ENCODE measurements at regions of chr9 and their contacts with region 1.

Region 1: DNA sequence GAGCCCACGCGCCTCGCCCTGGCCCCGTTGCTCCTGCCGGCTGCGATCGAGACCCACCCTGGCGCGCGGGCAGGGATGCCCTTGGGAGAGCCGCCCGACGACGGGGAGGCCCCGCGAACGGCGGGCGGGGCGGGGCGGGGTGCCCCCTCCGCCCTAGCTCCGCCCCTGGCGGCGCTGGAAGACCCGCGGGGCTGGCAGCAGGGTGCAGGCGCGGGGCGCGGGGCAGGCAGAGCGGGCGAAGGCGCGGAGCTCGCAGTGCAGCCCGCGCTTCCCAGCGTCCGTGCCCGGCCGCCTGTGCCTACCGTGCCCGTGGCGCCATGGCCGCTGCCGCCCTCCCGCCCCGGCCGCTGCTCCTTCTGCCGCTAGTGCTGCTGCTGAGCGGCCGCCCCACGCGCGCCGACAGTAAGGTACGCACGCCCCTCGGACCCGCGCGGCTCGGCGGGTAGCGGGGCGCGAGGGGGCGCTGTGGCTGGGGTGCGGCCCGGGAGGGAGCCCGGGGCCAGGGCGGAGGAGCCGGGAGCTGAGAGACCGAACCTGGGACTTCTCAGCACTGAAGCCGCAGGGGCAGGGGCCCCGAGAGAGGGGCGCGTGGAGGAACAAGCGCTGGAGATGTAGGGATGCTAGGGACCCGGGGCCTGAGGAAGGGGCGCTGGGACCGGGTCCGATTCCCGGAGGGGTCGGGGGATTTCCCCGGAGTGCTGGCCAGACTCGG is at the start of gene OLFML2A:
- DNase-seq: no peak
- H3K4me3 ChIP-seq: peak within 1 kb of the TSS; percentile 33 to 61 (median 58)
- H3K27ac ChIP-seq: no peak within 1 kb of the TSS
- H3K4me1 ChIP-seq: peaks cover 29% of the 10 kb centered on the region
- H3K27me3 ChIP-seq: no peaks in the 10 kb centered on the region
- CTCF ChIP-seq: peak in 1 of 2 donors; percentile 40
- total RNA-seq, gene OLFML2A: 4.2 to 6.2 TPM

Region 2: GRCh38 chr9:124809741-124810500 is 32.8 kb after region 1 on chr9:
- CTCF ChIA-PET with region 1: interaction called, 19 read pairs
- dilution Hi-C with region 1: no loop called
- in situ Hi-C with region 1: no loop called
- intact Hi-C with region 1: no loop called
- DNase-seq: no peak
- H3K4me3 ChIP-seq: no peak overlapping the region
- H3K27ac ChIP-seq: peak overlapping the region; percentile 86
- H3K4me1 ChIP-seq: peaks cover 47% of the 10 kb centered on the region
- H3K27me3 ChIP-seq: no peaks in the 10 kb centered on the region
- CTCF ChIP-seq: no peak

Region 3: GRCh38 chr9:124818431-124819281 is 41.5 kb after region 1 on chr9:
- CTCF ChIA-PET with region 1: interaction called, 19 read pairs
- dilution Hi-C with region 1: no loop called
- in situ Hi-C with region 1: no loop called
- intact Hi-C with region 1: loop called (anchors 1 kb)
- DNase-seq: peak; percentile 96
- H3K4me3 ChIP-seq: peak overlapping the region in 1 of 3 experiments; percentile 0
- H3K27ac ChIP-seq: peak overlapping the region; percentile 61
- H3K4me1 ChIP-seq: peaks cover 41% of the 10 kb centered on the region
- H3K27me3 ChIP-seq: no peaks in the 10 kb centered on the region
- CTCF ChIP-seq: peak in 1 of 2 donors; percentile 15

Region 4: GRCh38 chr9:124834591-124834990 is 57.5 kb after region 1 on chr9:
- CTCF ChIA-PET with region 1: interaction called, 5 read pairs
- dilution Hi-C with region 1: no loop called
- in situ Hi-C with region 1: no loop called
- intact Hi-C with region 1: loop called (anchors 1 kb)
- DNase-seq: peak; percentile 97
- H3K4me3 ChIP-seq: no peak overlapping the region
- H3K27ac ChIP-seq: peak overlapping the region; percentile 5
- H3K4me1 ChIP-seq: peaks cover 21% of the 10 kb centered on the region
- H3K27me3 ChIP-seq: no peaks in the 10 kb centered on the region
- CTCF ChIP-seq: no peak

Region 5: DNA sequence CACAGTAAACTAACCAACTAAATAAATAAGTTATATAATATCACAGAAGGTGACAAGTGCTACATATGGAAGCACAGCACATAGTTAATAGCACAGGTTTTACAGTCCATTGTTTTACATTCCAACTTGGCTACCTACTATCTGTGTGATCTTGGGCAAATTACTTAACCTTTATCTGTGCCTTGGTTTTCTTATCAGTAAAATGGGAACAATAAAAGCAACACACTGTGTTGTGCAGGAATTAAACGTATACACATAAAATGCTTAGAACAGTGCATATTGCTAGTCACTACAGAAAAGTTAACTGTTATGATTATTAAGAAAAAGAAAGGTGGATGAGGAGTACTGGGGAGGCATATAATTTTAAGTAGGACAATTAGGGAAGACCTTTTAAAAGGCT is 206.6 kb after region 1 on chr9:
- CTCF ChIA-PET with region 1: no interaction called
- dilution Hi-C with region 1: no loop called
- in situ Hi-C with region 1: no loop called
- intact Hi-C with region 1: no loop called
- DNase-seq: no peak
- H3K4me3 ChIP-seq: no peak overlapping the region
- H3K27ac ChIP-seq: no peak overlapping the region
- H3K4me1 ChIP-seq: no peaks in the 10 kb centered on the region
- H3K27me3 ChIP-seq: no peaks in the 10 kb centered on the region
- CTCF ChIP-seq: no peak

Region 6: GRCh38 chr9:125133403-125134329 is 356.6 kb after region 1 on chr9:
- CTCF ChIA-PET with region 1: no interaction called
- dilution Hi-C with region 1: no loop called
- in situ Hi-C with region 1: no loop called
- intact Hi-C with region 1: no loop called
- DNase-seq: peak; percentile 41
- H3K4me3 ChIP-seq: no peak overlapping the region
- H3K27ac ChIP-seq: no peak overlapping the region
- H3K4me1 ChIP-seq: no peaks in the 10 kb centered on the region
- H3K27me3 ChIP-seq: no peaks in the 10 kb centered on the region
- CTCF ChIP-seq: no peak